Calu3 (cell line): ENCODE measurements at regions of chr6 and their contacts with region 1.

Region 1: DNA sequence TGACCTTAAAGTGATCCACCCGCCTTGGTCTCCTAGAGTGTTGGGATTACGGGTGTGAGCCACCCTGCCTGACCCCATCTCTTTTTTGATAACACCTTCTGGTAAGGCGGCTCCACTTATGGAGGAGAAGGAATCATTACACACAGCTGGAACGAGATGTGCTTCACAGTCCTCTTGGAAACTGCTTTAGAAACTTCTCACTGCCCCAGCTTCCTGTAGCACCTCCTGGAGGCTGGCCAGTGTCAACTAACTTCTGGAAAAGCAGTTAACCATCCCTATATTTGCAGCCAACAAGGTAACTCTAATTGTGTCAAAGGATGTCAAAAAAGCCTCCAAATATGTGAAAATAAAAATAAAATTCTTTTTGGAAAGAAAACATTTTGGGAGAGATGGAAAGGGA is 48.8 kb upstream of the BCLAF1 start:
- DNase-seq: no peak
- H3K4me3 Mint-ChIP-seq: no peak overlapping the region
- H3K27ac Mint-ChIP-seq: no peak overlapping the region
- H3K4me1 Mint-ChIP-seq: peaks cover 9% of the 10 kb centered on the region
- H3K27me3 Mint-ChIP-seq: no peaks in the 10 kb centered on the region
- CTCF ChIP-seq: no peak

Region 2: DNA sequence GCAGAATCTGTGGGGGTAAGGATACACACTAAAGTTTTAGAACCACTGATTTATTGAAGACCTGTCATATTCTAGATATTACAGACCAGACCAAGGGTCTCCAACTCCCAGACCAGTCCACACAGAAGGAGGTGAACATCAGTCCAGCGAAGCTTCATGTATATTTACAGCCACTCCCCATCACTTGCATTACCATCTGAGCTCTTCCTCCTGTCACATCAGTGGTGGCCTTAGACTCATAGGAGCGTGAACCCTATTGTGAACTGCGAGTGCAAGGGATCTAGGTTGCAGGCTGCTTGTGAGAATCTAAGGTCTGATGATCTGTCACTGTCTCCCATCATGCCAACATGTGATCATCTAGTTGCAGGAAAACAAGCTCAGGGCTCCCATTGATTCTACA is 43.9 kb before region 1 on chr6:
- CTCF ChIA-PET with region 1: no interaction called
- intact Hi-C with region 1: no loop called
- DNase-seq: no peak
- H3K4me3 Mint-ChIP-seq: no peak overlapping the region
- H3K27ac Mint-ChIP-seq: no peak overlapping the region
- H3K4me1 Mint-ChIP-seq: no peaks in the 10 kb centered on the region
- H3K27me3 Mint-ChIP-seq: no peaks in the 10 kb centered on the region
- CTCF ChIP-seq: no peak

Region 3: DNA sequence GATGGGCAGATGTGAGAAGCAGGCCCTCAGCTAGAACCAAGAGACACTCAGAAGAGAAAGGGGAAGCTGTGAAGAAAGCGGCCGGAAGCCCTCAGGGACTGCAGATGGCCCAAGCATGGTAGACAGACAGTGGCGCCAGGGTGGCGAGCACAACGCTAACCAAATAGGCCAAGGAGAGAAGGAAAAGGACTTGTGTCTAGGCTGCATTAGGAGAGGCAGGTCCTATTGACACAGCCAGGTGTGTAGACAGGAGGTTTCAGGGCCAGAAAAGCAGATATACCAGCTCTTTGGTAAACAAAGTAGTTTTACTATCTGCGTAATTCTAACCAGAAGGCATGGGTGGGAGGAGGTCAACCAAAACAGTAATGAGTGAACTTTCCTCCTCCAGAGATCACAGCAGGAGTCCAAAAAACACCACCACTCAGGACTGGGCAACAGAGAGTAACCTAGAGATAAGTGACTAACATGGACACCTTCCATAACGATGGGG is 227.6 kb after region 1 on chr6:
- CTCF ChIA-PET with region 1: no interaction called
- intact Hi-C with region 1: no loop called
- DNase-seq: no peak
- H3K4me3 Mint-ChIP-seq: no peak overlapping the region
- H3K27ac Mint-ChIP-seq: no peak overlapping the region
- H3K4me1 Mint-ChIP-seq: peaks cover 25% of the 10 kb centered on the region
- H3K27me3 Mint-ChIP-seq: no peaks in the 10 kb centered on the region
- CTCF ChIP-seq: no peak

Region 4: GRCh38 chr6:136593748-136594490 is 255.4 kb after region 1 on chr6:
- CTCF ChIA-PET with region 1: interaction called, 14 read pairs
- intact Hi-C with region 1: no loop called
- DNase-seq: peak; percentile 71
- H3K4me3 Mint-ChIP-seq: peak overlapping the region; percentile 55
- H3K27ac Mint-ChIP-seq: peak overlapping the region; percentile 92
- H3K4me1 Mint-ChIP-seq: peaks cover 14% of the 10 kb centered on the region
- H3K27me3 Mint-ChIP-seq: no peaks in the 10 kb centered on the region
- CTCF ChIP-seq: no peak